ENCODE measurements at regions of chr7 and their contacts with region 1.

Region 1: GRCh38 chr7:81499262-81500116 is 270.4 kb downstream of the HGF start:
- DNase-seq: no peak

Region 2: DNA sequence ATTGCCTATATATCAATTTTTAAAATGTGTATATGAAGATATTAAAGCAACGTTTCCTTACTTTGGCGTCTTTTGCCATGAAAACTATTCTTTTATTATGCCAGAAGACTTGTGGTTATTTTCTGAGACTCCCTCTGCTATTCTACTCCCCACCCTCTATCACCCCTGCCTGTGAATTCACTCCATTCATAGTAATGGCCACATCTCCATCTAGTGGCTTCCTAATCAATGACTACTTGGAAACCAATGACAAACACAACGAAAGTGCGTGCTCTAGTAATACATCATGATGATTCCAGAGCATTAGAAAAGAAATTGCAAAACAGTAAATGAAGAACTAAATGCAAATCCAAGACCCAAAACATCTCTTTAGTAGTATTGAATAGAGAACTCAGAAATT is 457.0 kb after region 1 on chr7:
- intact Hi-C with region 1: loop called (anchors 1 kb)
- DNase-seq: peak in 1 of 10 donors; percentile 9

Region 3: DNA sequence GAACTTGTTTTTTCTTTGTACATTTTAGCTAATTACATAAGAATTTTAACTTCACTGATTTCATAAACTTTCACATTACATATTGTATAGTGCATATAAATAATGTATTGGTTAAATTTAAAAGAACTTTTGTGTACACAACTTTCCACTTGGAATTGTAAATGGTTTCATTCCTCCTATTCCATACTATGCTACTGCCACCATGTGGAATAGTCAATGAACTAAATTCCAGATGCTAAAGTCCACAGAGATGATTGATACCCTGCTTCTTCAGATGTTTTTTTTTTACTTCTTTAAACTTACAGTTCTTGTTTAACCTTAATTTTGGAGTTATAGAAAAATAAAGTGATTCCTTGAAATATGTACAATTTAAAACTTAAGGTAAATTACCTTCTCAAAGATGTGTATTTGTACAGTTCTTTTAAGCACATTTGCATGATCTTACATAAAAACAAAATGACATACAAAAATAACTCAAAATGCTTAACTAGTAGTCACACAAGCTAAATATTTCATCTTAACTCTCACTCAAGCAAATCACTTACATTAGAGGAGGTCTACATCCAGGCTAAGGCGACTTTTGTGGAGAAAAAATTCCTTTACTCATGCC is 518.0 kb after region 1 on chr7:
- intact Hi-C with region 1: loop called (anchors 2 kb)
- DNase-seq: no peak

Region 4: GRCh38 chr7:82605247-82605872 is 1105.9 kb after region 1 on chr7:
- intact Hi-C with region 1: loop called (anchors 1 kb)
- DNase-seq: peak in 2 of 10 donors; percentile 10 to 37

Region 5: DNA sequence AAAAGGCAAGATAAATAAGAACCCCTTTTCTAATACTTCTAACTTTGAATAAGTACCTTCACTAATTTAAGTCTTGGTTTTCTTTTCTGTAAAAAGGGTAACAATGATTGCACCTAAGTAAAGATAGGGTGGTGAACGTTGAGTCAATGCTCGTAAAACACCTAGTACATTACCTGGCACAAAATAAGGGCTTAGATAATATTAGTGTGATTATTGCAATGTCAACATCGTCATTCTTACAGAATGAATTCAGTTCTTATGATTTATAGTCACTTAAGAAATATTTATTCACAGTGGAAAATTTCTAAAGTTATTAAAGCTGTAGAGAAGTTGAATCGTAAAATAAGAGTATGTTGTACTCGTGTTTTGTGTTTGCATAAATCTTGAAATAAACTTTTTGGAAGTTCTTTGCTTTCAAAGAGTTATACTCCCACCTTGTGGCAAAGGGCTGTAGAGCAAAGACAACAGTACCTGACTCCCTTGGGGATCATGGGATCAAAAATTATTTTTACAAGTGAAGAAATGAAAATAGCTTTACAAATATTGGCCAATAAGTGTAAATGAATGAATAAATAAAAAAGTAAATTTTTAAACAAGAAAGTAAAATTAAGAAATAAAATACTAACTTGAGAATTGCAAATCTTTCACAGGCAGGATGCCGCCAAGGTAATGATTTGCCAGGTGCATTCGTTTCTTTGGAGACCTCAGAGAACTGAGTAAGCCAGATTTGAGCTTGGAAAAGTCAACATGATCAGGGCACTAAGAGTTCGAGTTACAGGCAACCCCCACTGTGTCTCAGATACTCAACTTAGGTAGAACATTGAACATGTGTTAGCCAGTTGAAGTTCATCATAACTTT is 1229.9 kb after region 1 on chr7:
- intact Hi-C with region 1: loop called (anchors 5 kb)
- DNase-seq: no peak

Measured in posterior cingulate gyrus (tissue), 11 donors.